ENCODE measurements at regions of chr6 and their contacts with region 1.

Region 1: DNA sequence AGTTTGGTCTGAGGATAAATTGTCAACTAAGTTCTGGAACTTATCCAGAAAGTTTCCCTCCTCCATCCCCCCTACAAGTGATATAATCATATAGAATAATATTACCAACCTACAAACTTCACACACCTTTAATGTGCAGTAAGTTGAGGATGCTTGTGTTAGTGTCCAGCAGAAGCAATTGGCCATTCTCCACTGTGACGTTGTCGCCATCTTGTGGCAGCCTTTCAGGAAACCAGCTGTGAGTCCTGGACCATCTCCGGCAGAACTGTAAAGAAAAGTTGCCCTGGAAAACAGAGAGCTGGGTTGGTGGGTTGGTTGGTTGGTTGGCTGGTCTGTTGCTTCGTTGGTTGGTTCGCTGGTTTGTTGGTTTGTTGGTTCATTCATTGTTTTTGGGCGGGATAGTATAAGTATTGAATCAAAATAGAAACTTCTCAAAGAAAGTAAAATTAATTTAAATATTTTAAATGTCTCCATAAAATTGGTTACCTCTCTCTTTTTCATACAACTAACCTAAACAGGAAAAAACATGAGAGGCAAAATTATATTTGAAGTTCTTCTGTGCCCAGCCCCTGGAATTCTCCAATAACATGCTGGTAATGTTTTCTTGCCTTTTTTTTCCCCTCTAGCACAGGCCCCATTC is 127.5 kb downstream of the PKHD1 start:
- DNase-seq: peak; percentile 40 to 91 (median 71)
- H3K4me3 ChIP-seq: no peak overlapping the region
- H3K27ac ChIP-seq: no peak overlapping the region
- H3K4me1 ChIP-seq: no peaks in the 10 kb centered on the region
- H3K27me3 ChIP-seq: no peaks in the 10 kb centered on the region
- CTCF ChIP-seq: peak; percentile 32 to 67 (median 56)
- POLR2A ChIP-seq: no peak

Region 2: DNA sequence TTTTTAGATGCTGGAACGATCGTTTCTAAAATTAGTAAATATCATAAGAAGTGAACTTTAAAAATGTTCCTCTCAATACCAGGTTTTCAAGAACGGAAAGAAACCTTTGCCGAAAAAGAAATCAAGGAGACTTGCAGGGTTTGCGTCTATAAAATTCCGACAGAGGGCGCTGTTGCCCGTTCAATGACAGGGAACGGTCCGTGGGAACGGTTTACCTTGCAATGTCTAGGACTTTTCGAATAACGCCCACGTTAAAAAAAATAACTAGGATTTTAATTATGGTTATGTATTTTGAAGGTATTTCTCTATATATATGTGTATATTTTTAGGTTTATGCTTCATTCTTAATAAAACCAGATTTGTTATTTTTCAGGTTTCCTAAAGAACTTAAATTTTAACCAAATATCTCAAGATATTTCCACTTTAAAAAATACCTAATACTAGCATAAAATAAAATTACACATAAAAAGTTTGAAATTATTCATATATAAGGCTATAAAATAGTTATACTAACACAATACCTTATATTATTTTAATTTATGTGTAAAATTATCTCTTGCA is 1143.7 kb before region 1 on chr6:
- intact Hi-C with region 1: loop called in 1 of 2 experiments (anchors 5 kb)
- DNase-seq: peak; percentile 53 to 91 (median 75)
- H3K4me3 ChIP-seq: peak overlapping the region in 2 of 4 donors; percentile 10 to 52
- H3K27ac ChIP-seq: no peak overlapping the region
- H3K4me1 ChIP-seq: peaks cover 8 to 13% of the 10 kb centered on the region in 2 donors
- H3K27me3 ChIP-seq: peaks cover 42% of the 10 kb centered on the region
- CTCF ChIP-seq: peak; percentile 72 to 93 (median 78)
- POLR2A ChIP-seq: no peak

Measured in adrenal gland (tissue), 19 donors.